OCI-LY7 (cell line): ENCODE measurements at regions of chr3 and their contacts with region 1.

Region 1: GRCh38 chr3:179646177-179646576 is 6.7 kb upstream of the USP13 start:
- DNase-seq: no peak
- H3K4me3 ChIP-seq: no peak overlapping the region
- H3K27ac ChIP-seq: no peak overlapping the region
- H3K4me1 ChIP-seq: peaks cover 1% of the 10 kb centered on the region
- CTCF ChIP-seq: no peak

Region 2: GRCh38 chr3:179391906-179392305 is 254.3 kb before region 1 on chr3:
- CTCF ChIA-PET with region 1: no interaction called
- POLR2A ChIA-PET with region 1: no interaction called
- intact Hi-C with region 1: no loop called
- DNase-seq: peak; percentile 27
- H3K4me3 ChIP-seq: no peak overlapping the region
- H3K27ac ChIP-seq: peak overlapping the region; percentile 30
- H3K4me1 ChIP-seq: peaks cover 16% of the 10 kb centered on the region
- CTCF ChIP-seq: no peak

Region 3: DNA sequence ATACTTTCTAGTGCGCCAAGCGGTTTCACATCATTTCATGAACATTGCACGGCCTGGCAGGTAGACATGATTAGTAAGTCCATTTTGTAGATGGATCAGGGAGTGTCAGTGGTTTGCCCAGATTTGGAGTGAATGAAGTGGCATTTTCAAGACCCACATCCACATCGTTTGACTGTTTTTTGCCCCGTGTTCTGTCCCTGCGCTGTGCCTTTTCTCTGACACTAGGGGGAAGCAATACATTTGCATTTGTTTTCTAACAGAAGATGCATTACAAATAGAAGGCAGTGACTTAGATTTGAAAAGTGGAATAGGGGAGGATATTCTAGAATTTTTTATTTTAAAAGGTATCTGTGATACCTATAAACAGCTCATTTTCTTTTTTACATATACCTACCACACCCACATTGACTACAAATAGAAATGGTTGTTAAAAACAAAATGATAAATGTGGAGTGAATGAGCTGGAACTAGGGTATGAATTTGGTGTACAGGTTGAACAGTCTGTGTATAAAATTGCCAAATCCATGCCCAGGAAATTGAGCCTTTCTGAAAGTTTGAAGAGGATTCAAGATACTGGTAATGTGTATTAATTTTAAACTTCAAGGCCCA is 104.6 kb after region 1 on chr3:
- CTCF ChIA-PET with region 1: no interaction called
- POLR2A ChIA-PET with region 1: no interaction called
- intact Hi-C with region 1: no loop called
- DNase-seq: peak; percentile 17
- H3K4me3 ChIP-seq: no peak overlapping the region
- H3K27ac ChIP-seq: no peak overlapping the region
- H3K4me1 ChIP-seq: no peaks in the 10 kb centered on the region
- CTCF ChIP-seq: peak; percentile 75

Region 4: DNA sequence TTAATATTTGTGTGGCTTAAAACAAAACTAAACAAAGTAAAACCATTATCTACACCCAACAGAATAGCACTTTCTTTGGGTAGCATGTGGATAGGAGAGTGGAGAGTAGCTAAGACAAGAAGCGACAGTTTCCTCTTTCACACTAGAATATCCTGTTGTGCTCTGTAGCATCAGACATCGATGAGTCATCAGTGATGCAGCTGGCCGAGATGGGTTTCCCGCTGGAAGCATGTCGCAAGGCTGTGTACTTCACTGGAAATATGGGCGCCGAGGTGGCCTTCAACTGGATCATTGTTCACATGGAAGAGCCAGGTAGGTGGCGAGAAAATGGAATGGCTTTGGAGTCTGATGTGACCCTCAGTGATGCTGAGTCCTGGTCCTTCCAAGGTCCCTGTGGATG is 114.8 kb after region 1 on chr3:
- CTCF ChIA-PET with region 1: no interaction called
- POLR2A ChIA-PET with region 1: no interaction called
- intact Hi-C with region 1: loop called (anchors 5 kb)
- DNase-seq: no peak
- H3K4me3 ChIP-seq: no peak overlapping the region
- H3K27ac ChIP-seq: no peak overlapping the region
- H3K4me1 ChIP-seq: no peaks in the 10 kb centered on the region
- CTCF ChIP-seq: no peak